MCF 10A (cell line): ENCODE measurements at regions of chr6 and their contacts with region 1.

Region 1: GRCh38 chr6:142313284-142313683 is 11.5 kb downstream of the ADGRG6 start:
- DNase-seq: peak; percentile 61
- H3K4me3 Mint-ChIP-seq: peak overlapping the region; percentile 15
- H3K27ac Mint-ChIP-seq: peak overlapping the region; percentile 57
- H3K4me1 Mint-ChIP-seq: peaks cover 11% of the 10 kb centered on the region
- H3K27me3 Mint-ChIP-seq: no peaks in the 10 kb centered on the region
- CTCF ChIP-seq: no peak

Region 2: GRCh38 chr6:142195862-142196541 is 117.3 kb before region 1 on chr6:
- CTCF ChIA-PET with region 1: no interaction called
- POLR2A ChIA-PET with region 1: no interaction called
- intact Hi-C with region 1: no loop called
- DNase-seq: no peak
- H3K4me3 Mint-ChIP-seq: no peak overlapping the region
- H3K27ac Mint-ChIP-seq: no peak overlapping the region
- H3K4me1 Mint-ChIP-seq: peaks cover 6% of the 10 kb centered on the region
- H3K27me3 Mint-ChIP-seq: no peaks in the 10 kb centered on the region
- CTCF ChIP-seq: no peak

Region 3: GRCh38 chr6:142323377-142324040 is 10.2 kb after region 1 on chr6:
- CTCF ChIA-PET with region 1: interaction called, 3 read pairs
- POLR2A ChIA-PET with region 1: interaction called, 12 read pairs
- intact Hi-C with region 1: no loop called
- DNase-seq: peak; percentile 80
- H3K4me3 Mint-ChIP-seq: no peak overlapping the region
- H3K27ac Mint-ChIP-seq: peak overlapping the region; percentile 11
- H3K4me1 Mint-ChIP-seq: peaks cover 23% of the 10 kb centered on the region
- H3K27me3 Mint-ChIP-seq: no peaks in the 10 kb centered on the region
- CTCF ChIP-seq: no peak